ENCODE measurements at regions of chr9 and their contacts with region 1.

Region 1: GRCh38 chr9:134391314-134392231 is 65.3 kb downstream of the RXRA start:
- DNase-seq: peak; percentile 59
- H3K4me3 Mint-ChIP-seq: peak overlapping the region; percentile 51
- H3K27ac Mint-ChIP-seq: peak overlapping the region; percentile 82
- H3K4me1 Mint-ChIP-seq: peaks cover 38% of the 10 kb centered on the region
- H3K27me3 Mint-ChIP-seq: peaks cover 33% of the 10 kb centered on the region

Region 2: GRCh38 chr9:133701862-133702797 is 689.4 kb before region 1 on chr9:
- intact Hi-C with region 1: no loop called
- DNase-seq: peak; percentile 33
- H3K4me3 Mint-ChIP-seq: peak overlapping the region; percentile 65
- H3K27ac Mint-ChIP-seq: peak overlapping the region; percentile 72
- H3K4me1 Mint-ChIP-seq: peaks cover 26% of the 10 kb centered on the region
- H3K27me3 Mint-ChIP-seq: peaks cover 15% of the 10 kb centered on the region

Region 3: GRCh38 chr9:134135343-134136118 is 256.0 kb before region 1 on chr9 and contains the start of gene WDR5:
- intact Hi-C with region 1: no loop called
- DNase-seq: peak; percentile 84
- H3K4me3 Mint-ChIP-seq: peak within 1 kb of the TSS; percentile 96
- H3K27ac Mint-ChIP-seq: peak within 1 kb of the TSS; percentile 93
- H3K4me1 Mint-ChIP-seq: peaks cover 29% of the 10 kb centered on the region
- H3K27me3 Mint-ChIP-seq: no peaks in the 10 kb centered on the region
- total RNA-seq, gene WDR5: 65.0 and 71.3 TPM in 2 replicates

Region 4: GRCh38 chr9:134301387-134302129 is 90.0 kb before region 1 on chr9:
- intact Hi-C with region 1: loop called (anchors 1 kb)
- DNase-seq: peak; percentile 32
- H3K4me3 Mint-ChIP-seq: no peak overlapping the region
- H3K27ac Mint-ChIP-seq: no peak overlapping the region
- H3K4me1 Mint-ChIP-seq: peaks cover 6% of the 10 kb centered on the region
- H3K27me3 Mint-ChIP-seq: peaks cover 6% of the 10 kb centered on the region

Region 5: GRCh38 chr9:134407123-134407808 is 15.7 kb after region 1 on chr9:
- intact Hi-C with region 1: loop called (anchors 1 kb)
- DNase-seq: peak; percentile 73
- H3K4me3 Mint-ChIP-seq: peak overlapping the region; percentile 65
- H3K27ac Mint-ChIP-seq: peak overlapping the region; percentile 83
- H3K4me1 Mint-ChIP-seq: peaks cover 29% of the 10 kb centered on the region
- H3K27me3 Mint-ChIP-seq: peaks cover 8% of the 10 kb centered on the region

Measured in activated T-helper 1 cell treated with anti-CD3 and anti-CD28 coated beads, Interleukin-12 subunit alpha, Interleukin-12 subunit beta, Interleukin-2, Interleukin-4 antibody, amounts not matched to agents 30 ng/mL and 10 ng/mL and 1 ng/mL, durations not matched to agents 14 hours and 24 hours and 36 hours (primary cell).